Activated CD8-positive, alpha-beta T cell treated with anti-CD3 and anti-CD28 coated beads for 36 hours (primary cell): ENCODE measurements at regions of chr6 and their contacts with region 1.

Region 1: GRCh38 chr6:41976794-41977484 is 35.3 kb upstream of the CCND3 start:
- DNase-seq: peak; percentile 71
- ATAC-seq: peak; percentile 92
- H3K4me3 Mint-ChIP-seq: peak overlapping the region; percentile 74
- H3K27ac Mint-ChIP-seq: peak overlapping the region; percentile 99
- H3K4me1 Mint-ChIP-seq: peaks cover 69% of the 10 kb centered on the region
- H3K27me3 Mint-ChIP-seq: no peaks in the 10 kb centered on the region
- CTCF ChIP-seq: no peak

Region 2: DNA sequence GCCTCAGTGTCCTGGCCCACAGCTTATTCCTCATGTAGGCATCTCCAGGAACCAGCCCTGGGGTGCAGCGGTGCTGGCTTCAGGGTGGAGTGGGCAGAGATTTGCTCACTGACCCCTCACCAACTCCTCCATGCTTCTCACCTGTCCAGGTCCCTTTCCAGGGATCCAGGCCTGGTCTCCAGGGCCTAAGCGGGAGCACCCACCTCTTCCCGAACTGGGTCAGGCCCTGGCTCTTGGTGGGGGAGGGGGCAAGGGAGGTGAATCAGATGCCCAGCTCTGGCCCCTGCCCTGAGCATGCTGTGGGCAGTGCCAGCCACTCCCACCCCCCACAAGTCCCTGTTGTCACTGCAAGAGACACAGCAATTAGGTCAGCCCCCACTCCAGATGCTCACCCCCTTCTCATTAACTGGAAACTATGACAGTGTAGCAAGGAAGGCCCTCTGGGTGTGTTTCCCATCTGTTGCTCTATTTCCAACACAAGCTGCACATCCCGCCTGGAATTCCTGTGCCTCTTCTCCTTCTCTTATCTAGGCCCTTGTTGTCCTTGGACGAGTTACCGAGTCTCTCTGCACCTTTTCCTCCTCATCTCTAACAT is 301.7 kb before region 1 on chr6:
- CTCF ChIA-PET with region 1: no interaction called
- POLR2A ChIA-PET with region 1: no interaction called
- intact Hi-C with region 1: no loop called
- DNase-seq: no peak
- ATAC-seq: no peak
- H3K4me3 Mint-ChIP-seq: no peak overlapping the region
- H3K27ac Mint-ChIP-seq: no peak overlapping the region
- H3K4me1 Mint-ChIP-seq: no peaks in the 10 kb centered on the region
- H3K27me3 Mint-ChIP-seq: peaks cover 7% of the 10 kb centered on the region
- CTCF ChIP-seq: no peak

Region 3: GRCh38 chr6:42009966-42010891 is 33.3 kb after region 1 on chr6:
- CTCF ChIA-PET with region 1: interaction called, 5 read pairs
- POLR2A ChIA-PET with region 1: interaction called, 7 read pairs
- intact Hi-C with region 1: loop called (anchors 5 kb)
- DNase-seq: peak; percentile 68
- ATAC-seq: peak; percentile 69
- H3K4me3 Mint-ChIP-seq: peak overlapping the region; percentile 74
- H3K27ac Mint-ChIP-seq: peak overlapping the region; percentile 94
- H3K4me1 Mint-ChIP-seq: peaks cover 76% of the 10 kb centered on the region
- H3K27me3 Mint-ChIP-seq: no peaks in the 10 kb centered on the region
- CTCF ChIP-seq: no peak

Region 4: GRCh38 chr6:42038811-42039408 is 62.0 kb after region 1 on chr6:
- CTCF ChIA-PET with region 1: interaction called, 3 read pairs
- POLR2A ChIA-PET with region 1: interaction called, 7 read pairs
- intact Hi-C with region 1: loop called (anchors 5 kb)
- DNase-seq: no peak
- ATAC-seq: no peak
- H3K4me3 Mint-ChIP-seq: peak overlapping the region; percentile 78
- H3K27ac Mint-ChIP-seq: peak overlapping the region; percentile 99
- H3K4me1 Mint-ChIP-seq: peaks cover 67% of the 10 kb centered on the region
- H3K27me3 Mint-ChIP-seq: no peaks in the 10 kb centered on the region
- CTCF ChIP-seq: no peak